Dendritic cell treated with granulocyte-macrophage colony-stimulating factor and Interleukin-4, amounts not matched to agents 40 ng/mL and 50 ng/mL, for 4 days (primary cell): ENCODE measurements at regions of chr17 and their contacts with region 1.

Region 1: DNA sequence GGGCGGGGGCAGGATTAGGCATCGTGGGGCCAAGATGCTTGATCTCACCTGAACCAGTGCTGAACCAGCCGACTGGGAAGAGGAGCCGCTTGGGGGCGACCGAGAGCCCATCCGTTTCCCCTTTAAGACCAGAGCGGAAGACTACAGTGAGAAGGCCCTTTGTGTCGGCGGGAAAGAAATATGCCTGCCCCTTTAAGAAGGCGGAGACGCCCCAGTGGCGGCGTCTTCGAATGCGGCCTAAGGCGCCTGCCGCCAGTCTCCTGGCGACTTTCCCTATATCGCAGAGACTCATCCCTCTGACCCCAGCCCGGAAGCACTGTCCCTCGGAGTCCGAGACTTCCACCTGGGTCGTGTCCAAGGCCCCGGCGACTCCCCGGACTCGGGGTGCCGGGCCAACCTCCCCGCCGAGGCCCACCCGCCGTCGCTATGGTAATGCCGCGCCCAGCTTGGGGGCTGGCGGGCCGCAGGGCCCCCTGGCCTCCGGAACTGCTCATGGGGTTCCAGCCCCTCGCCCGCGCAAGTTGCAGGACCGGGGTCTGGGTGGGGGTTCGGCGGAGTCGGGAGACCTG is at the start of gene HROB:
- H3K4me3 Mint-ChIP-seq: peak within 1 kb of the TSS; percentile 79
- H3K27ac Mint-ChIP-seq: peak within 1 kb of the TSS; percentile 76
- H3K4me1 Mint-ChIP-seq: peaks cover 31% of the 10 kb centered on the region
- H3K27me3 Mint-ChIP-seq: peaks cover 3% of the 10 kb centered on the region

Region 2: DNA sequence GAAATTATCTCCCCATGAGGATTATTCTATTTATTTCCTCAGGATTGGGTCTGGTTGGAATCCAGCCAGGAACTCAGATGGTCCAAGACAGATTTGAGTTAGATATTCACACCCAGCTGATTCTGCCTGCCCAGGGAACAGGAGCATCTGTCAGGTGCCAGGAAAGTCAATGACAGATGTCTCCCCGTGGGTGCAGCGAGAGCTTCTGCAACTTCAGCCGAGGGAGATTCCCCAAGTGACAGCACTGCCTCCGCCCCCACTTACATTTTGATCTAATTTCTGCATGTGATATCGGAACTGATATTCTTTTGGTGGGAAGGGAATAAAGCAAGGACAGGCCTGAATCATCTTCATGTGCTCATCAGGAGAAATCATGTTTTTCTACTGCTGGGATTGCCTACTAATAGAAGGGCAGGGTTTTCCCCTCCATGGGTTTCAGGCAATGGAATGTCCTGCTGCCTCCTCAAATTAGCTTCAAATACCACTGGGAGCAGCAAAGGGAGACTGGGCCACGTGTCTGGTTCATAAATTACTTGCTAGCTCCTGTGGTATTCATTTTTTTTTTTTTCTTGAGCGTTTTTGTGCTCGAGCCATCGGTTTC is 673.7 kb before region 1 on chr17:
- intact Hi-C with region 1: no loop called
- H3K4me3 Mint-ChIP-seq: no peak overlapping the region
- H3K27ac Mint-ChIP-seq: no peak overlapping the region
- H3K4me1 Mint-ChIP-seq: peaks cover 48% of the 10 kb centered on the region
- H3K27me3 Mint-ChIP-seq: peaks cover 7% of the 10 kb centered on the region

Region 3: GRCh38 chr17:44123356-44124117 is 18.3 kb before region 1 on chr17 and contains the start of gene HDAC5:
- intact Hi-C with region 1: loop called (anchors 2 kb)
- H3K4me3 Mint-ChIP-seq: peak within 1 kb of the TSS; percentile 90
- H3K27ac Mint-ChIP-seq: peak within 1 kb of the TSS; percentile 96
- H3K4me1 Mint-ChIP-seq: peaks cover 41% of the 10 kb centered on the region
- H3K27me3 Mint-ChIP-seq: no peaks in the 10 kb centered on the region

Region 4: DNA sequence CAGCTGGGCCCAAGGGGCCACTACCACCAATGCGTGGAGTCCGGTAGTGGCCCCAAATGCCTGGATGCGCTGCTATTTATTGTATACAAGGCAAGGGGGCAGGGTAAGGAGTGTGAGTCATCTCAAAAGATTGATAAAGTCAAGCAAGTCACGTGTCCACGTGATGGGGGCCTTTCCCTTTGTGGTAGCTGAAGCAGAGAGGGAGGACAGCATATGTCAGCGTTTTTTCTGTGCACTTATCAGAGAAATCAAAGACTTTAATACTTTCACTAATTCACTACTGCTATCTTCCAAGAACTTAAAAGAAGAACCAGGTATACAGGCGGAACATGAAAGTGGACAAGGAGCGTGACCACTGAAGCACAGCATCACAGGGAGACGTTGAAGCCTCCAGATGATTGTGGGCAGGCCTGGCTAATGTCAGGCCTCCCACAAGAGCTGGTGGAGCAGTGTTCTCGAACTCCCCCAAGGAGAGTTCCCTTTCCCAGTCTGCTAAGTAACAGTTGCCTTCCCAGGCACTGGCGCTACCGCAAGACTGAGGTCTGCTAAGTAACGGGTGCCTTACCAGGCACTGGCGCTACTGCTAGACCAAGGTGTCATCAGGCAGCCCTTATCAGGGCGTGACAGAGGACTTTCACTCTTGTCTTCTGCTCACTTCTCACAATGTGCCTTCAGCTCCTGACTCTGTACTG is 17.9 kb after region 1 on chr17:
- intact Hi-C with region 1: no loop called
- H3K4me3 Mint-ChIP-seq: no peak overlapping the region
- H3K27ac Mint-ChIP-seq: peak overlapping the region; percentile 64
- H3K4me1 Mint-ChIP-seq: peaks cover 4% of the 10 kb centered on the region
- H3K27me3 Mint-ChIP-seq: no peaks in the 10 kb centered on the region

Region 5: GRCh38 chr17:44170499-44171201 is 28.8 kb after region 1 on chr17 and contains the start of gene ASB16:
- intact Hi-C with region 1: loop called (anchors 1 kb)
- H3K4me3 Mint-ChIP-seq: no peak within 1 kb of the TSS
- H3K27ac Mint-ChIP-seq: no peak within 1 kb of the TSS
- H3K4me1 Mint-ChIP-seq: peaks cover 8% of the 10 kb centered on the region
- H3K27me3 Mint-ChIP-seq: peaks cover 5% of the 10 kb centered on the region

Region 6: GRCh38 chr17:44376124-44376523 is 234.3 kb after region 1 on chr17:
- intact Hi-C with region 1: no loop called
- H3K4me3 Mint-ChIP-seq: no peak overlapping the region
- H3K27ac Mint-ChIP-seq: no peak overlapping the region
- H3K4me1 Mint-ChIP-seq: peaks cover 7% of the 10 kb centered on the region
- H3K27me3 Mint-ChIP-seq: peaks cover 31% of the 10 kb centered on the region